ENCODE measurements at regions of chr3 and their contacts with region 1.

Region 1: DNA sequence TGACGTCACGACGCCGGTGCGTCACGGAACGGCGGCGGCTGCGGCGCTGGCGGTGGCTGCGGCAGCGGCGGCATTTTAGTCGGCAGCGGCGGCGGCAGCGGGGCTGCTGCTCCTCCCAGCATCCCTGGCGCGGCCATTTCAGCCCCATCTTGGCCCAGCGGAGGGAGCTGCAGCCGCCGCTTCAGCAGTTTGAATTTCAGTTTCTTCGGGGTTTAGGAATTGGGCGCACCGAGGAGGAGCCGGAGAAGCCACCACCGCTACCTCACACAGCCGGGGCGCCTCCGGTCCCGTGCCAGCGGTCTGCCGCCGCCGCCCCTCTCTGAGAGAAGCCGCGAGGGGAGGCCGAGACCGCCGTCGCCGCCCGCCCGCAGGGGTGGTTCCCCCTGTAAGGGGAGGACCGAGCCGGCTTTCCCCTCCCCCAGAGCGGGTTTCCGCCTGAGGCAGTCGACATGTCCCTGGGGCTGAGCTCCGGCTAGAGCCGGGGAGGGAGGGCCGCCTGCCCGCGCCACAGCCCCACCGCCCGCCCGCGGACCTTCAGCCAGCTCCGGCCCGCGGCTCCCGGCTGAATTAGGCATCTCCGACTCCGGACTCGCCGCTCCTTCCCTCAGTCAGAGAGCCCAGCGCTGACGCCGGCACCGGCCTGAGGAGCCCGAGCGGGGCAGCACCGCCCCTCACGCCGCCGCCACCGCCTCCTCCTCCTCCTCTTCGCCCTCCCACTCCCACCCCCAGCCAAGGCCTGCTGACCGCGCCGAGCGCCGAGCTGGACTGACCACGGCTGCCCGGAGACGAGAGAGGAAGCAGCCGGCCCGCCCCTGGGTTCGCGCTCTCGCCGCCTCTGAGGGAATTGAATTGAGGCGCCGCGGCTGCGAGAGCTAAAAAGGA is at the start of gene TSC22D2:
- DNase-seq: peak; percentile 92
- ATAC-seq: peak; percentile 66
- H3K4me3 Mint-ChIP-seq: peak within 1 kb of the TSS; percentile 73
- H3K27ac Mint-ChIP-seq: peak within 1 kb of the TSS; percentile 97
- H3K4me1 Mint-ChIP-seq: peaks cover 44% of the 10 kb centered on the region
- H3K27me3 Mint-ChIP-seq: no peaks in the 10 kb centered on the region
- CTCF ChIP-seq: no peak
- total RNA-seq, gene TSC22D2: 20.1 to 24.0 TPM (median 21.1 TPM) in 3 replicates

Region 2: DNA sequence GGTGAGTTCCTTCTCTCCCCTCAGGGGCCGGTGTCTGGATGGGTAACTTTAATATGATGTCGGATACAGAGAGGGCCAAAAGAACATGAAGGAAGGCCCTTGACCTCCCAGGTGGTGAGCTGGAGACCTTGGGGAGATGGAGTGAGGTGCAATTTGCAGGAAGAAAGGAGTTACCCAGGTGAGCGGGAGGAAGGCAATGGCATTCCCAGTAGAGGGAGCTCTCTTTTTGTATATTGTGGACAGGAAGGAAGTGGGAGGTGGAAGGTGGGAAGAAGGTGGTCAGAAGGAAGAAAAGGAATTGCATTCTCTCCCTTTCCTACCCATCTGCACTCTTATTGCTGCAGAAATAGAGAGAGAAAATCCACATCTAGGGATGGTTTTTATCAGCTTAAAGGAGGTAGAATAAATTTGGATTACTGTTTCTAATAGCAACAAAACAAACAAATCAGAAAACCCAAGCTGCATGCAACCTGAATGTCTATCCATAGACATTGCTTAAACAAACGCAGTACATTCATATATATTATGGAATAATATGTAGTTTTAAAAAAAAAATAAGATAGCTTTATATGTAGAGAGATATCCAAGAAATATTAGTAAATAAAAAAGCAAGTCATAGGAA is 169.4 kb before region 1 on chr3:
- CTCF ChIA-PET with region 1: interaction called, 18 read pairs
- POLR2A ChIA-PET with region 1: interaction called, 3 read pairs
- DNase-seq: peak; percentile 44
- ATAC-seq: peak; percentile 92
- H3K4me3 Mint-ChIP-seq: no peak overlapping the region
- H3K27ac Mint-ChIP-seq: peak overlapping the region; percentile 79; the same call in 1 of the 2 replicates
- H3K4me1 Mint-ChIP-seq: peaks cover 28% of the 10 kb centered on the region
- H3K27me3 Mint-ChIP-seq: no peaks in the 10 kb centered on the region
- CTCF ChIP-seq: 0 out of 2 replicates have a peak, but pooled peaks have one; percentile 18

Region 3: GRCh38 chr3:150286390-150287147 is 121.9 kb before region 1 on chr3:
- CTCF ChIA-PET with region 1: interaction called, 10 read pairs
- POLR2A ChIA-PET with region 1: interaction called, 3 read pairs
- DNase-seq: no peak
- ATAC-seq: peak; percentile 97
- H3K4me3 Mint-ChIP-seq: no peak overlapping the region; the same call in 1 of the 2 replicates
- H3K27ac Mint-ChIP-seq: peak overlapping the region; percentile 59
- H3K4me1 Mint-ChIP-seq: peaks cover 9% of the 10 kb centered on the region
- H3K27me3 Mint-ChIP-seq: no peaks in the 10 kb centered on the region
- CTCF ChIP-seq: peak; percentile 57; the same call in 1 of the 2 replicates

Region 4: DNA sequence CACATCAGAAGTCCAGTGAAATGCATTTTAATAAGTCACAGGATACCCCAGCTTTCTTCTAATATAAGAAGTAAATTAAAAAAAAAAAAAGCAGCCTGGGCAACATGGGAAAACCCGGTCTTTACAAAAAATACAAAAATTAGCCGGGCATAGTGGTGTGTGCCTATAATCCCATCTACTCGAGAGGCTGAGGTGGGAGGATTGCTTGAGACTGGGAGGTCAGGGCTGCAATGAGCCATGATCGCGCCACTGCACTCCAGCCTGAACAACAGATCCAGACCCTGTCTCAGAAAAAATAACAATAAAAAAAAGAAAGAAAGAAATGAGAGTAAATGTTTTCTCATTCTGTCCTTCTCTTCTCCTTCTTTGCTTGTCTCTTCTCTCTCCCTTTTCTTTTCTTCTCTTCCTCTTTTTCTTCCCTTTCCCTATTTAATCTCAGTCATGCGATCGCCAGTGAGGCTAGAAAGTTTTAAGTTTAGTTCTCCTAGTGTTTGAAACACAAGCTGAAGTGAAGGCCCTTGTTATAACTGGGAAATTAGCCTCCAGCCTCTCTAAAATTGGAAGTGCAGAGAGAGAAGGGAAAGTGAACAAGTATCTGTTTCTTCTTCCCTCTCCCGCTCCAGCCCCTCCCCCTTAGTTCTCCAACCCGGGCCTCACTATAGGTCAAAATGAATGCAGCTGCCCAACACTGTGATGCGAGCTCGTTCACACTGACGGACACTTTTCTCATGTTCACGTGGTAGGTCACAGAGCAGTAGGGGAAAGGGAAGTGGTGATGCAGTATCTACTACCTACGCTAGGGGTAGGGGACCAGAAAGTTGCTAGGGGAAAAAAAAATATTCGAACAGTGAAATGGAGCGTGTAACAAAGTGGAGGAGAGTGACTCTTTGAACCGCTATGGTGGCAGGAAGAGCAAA is 23.9 kb before region 1 on chr3:
- CTCF ChIA-PET with region 1: interaction called, 17 read pairs
- POLR2A ChIA-PET with region 1: interaction called, 3 read pairs
- DNase-seq: peak; percentile 51
- ATAC-seq: peak; percentile 100
- H3K4me3 Mint-ChIP-seq: peak overlapping the region; percentile 36
- H3K27ac Mint-ChIP-seq: peak overlapping the region; percentile 89
- H3K4me1 Mint-ChIP-seq: peaks cover 18% of the 10 kb centered on the region
- H3K27me3 Mint-ChIP-seq: no peaks in the 10 kb centered on the region
- CTCF ChIP-seq: no peak

Measured in WTC11 (cell line).